ENCODE measurements at regions of chr11 and their contacts with region 1.

Region 1: GRCh38 chr11:14275076-14275475 is 83.9 kb downstream of the RRAS2 start:
- DNase-seq: no peak
- H3K4me3 ChIP-seq: no peak overlapping the region
- H3K27ac ChIP-seq: no peak overlapping the region
- H3K4me1 ChIP-seq: no peaks in the 10 kb centered on the region; a peak in 1 of 7 replicates
- H3K27me3 ChIP-seq: no peaks in the 10 kb centered on the region
- CTCF ChIP-seq: no peak
- EP300 ChIP-seq: no peak
- POLR2A ChIP-seq: no peak
- RAD21 ChIP-seq: no peak

Region 2: DNA sequence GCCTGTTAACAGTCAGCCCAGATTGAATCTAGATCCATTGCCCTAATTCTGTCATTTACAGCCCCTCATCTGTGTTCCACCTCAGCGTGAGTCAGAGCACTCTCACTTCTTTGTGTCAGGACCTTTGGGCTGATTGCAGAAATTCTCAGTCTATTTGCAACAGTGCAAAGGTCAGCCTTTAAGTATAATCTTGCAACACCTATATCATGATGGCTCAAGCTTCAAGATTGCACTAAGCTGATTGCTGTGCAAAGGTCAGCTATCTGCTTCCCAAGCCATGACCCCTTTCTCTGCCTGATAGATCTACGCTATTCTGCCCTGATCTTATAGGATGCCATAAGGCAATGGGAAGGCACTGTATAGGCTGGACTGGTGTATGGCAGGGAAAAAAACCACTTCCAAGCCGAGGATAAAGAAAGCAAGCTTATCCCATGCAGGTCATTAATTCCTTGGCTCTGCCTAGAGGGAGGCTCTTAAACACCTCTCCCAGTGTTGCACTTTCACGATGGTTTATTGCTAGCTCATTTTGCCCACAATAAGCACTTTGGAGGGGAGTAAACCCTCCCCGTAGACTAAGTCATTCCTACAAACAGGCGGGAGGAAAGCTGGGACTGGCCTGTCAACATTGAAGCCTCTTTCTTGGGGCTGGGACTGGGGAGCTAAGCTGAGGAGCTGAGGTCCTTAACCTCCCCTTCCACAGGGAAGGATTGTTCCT is 16.7 kb before region 1 on chr11:
- CTCF ChIA-PET with region 1: interaction called, 3 read pairs
- POLR2A ChIA-PET with region 1: interaction called, 22 read pairs
- DNase-seq: peak in 1 of 2 experiments; percentile 40
- H3K4me3 ChIP-seq: no peak overlapping the region
- H3K27ac ChIP-seq: no peak overlapping the region
- H3K4me1 ChIP-seq: no peaks in the 10 kb centered on the region; a peak in 1 of 7 replicates
- H3K27me3 ChIP-seq: no peaks in the 10 kb centered on the region
- CTCF ChIP-seq: no peak
- EP300 ChIP-seq: no peak
- POLR2A ChIP-seq: no peak
- RAD21 ChIP-seq: no peak

Region 3: DNA sequence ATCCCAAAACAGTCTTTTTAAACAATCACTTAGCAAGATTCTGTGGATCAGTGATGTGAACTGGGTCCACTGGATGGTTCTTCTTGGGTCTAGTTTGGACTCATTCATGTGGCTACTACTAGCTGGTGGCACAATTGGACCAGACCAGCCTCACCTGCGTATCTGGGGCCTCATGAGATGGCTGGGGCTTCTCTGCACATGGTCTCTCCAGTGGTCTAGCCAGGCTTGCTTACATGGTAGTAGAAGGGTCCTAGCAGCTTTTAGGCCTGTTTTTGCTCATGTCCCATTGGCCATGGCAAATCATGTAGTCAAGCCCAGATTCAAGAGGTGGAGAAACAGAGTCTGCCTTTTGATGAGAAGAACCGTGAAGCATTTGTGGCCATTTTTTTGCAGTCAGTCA is 10.1 kb before region 1 on chr11:
- CTCF ChIA-PET with region 1: no interaction called
- POLR2A ChIA-PET with region 1: interaction called, 22 read pairs
- DNase-seq: peak in 1 of 2 experiments; percentile 40
- H3K4me3 ChIP-seq: no peak overlapping the region
- H3K27ac ChIP-seq: no peak overlapping the region
- H3K4me1 ChIP-seq: no peaks in the 10 kb centered on the region
- H3K27me3 ChIP-seq: peaks cover 0 to 2% (median 0%) of the 10 kb centered on the region in 4 experiments; a peak in 1 of 7 replicates
- CTCF ChIP-seq: no peak
- EP300 ChIP-seq: no peak
- POLR2A ChIP-seq: no peak; a peak in 1 of 3 replicates
- RAD21 ChIP-seq: no peak

Region 4: DNA sequence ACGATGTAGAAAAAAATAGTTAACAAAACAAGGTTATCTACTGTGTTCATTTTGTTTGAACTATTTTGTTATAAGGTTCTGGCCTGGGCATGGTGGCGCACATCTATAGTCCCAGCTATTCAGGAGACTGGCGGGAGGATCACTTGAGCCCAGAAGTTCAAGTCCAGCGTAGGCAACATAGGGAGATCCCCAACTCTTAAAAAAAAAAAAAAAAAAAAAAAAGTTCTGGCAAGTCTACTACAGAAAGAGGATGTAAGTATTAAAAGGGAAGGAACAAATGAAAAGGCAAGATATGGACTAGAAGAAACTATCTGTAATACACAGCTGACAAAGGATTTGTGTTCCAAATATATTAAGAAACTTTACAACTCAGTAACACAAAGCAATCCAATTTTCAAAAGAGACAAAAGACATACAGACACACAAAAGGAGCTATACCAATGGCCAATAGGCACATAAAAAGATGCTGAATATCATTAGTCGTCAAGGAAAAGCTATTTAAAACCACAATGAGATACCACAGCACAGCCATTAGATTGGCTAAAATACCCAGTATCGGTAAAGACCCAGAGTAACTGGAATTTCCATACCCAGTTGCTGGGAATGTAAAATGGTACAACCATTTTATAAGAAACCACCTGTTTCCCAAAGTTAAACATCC is 56.5 kb after region 1 on chr11:
- CTCF ChIA-PET with region 1: no interaction called
- POLR2A ChIA-PET with region 1: no interaction called
- DNase-seq: no peak
- H3K4me3 ChIP-seq: no peak overlapping the region
- H3K27ac ChIP-seq: no peak overlapping the region
- H3K4me1 ChIP-seq: peaks cover 5 to 29% (median 11%) of the 10 kb centered on the region in 4 experiments; a peak in 6 of 7 replicates
- H3K27me3 ChIP-seq: no peaks in the 10 kb centered on the region
- CTCF ChIP-seq: no peak
- EP300 ChIP-seq: no peak
- POLR2A ChIP-seq: no peak
- RAD21 ChIP-seq: no peak

Measured in H1 (cell line).